ENCODE measurements at regions of chr1 and their contacts with region 1.

Region 1: GRCh38 chr1:244652699-244653466 is at the start of gene DESI2:
- DNase-seq: peak; percentile 99
- ATAC-seq: peak; percentile 94 to 97 (median 96)
- H3K4me3 ChIP-seq: peak within 1 kb of the TSS; percentile 98
- H3K27ac ChIP-seq: peak within 1 kb of the TSS; percentile 99
- H3K4me1 ChIP-seq: peaks cover 34% of the 10 kb centered on the region
- H3K27me3 ChIP-seq: no peaks in the 10 kb centered on the region
- CTCF ChIP-seq: peak; percentile 53
- total RNA-seq, gene DESI2: 18.3 to 20.1 (median 19.6) TPM

Region 2: GRCh38 chr1:244451951-244452795 is 200.7 kb before region 1 on chr1:
- intact Hi-C with region 1: loop called in 1 of 2 experiments (anchors 5 kb)
- DNase-seq: peak; percentile 100
- ATAC-seq: peak; percentile 96 to 99 (median 98)
- H3K4me3 ChIP-seq: peak overlapping the region; percentile 97
- H3K27ac ChIP-seq: peak overlapping the region; percentile 93
- H3K4me1 ChIP-seq: peaks cover 22% of the 10 kb centered on the region
- H3K27me3 ChIP-seq: no peaks in the 10 kb centered on the region
- CTCF ChIP-seq: peak; percentile 42

Region 3: GRCh38 chr1:244461245-244462071 is 191.4 kb before region 1 on chr1 and contains the start of gene CATSPERE:
- intact Hi-C with region 1: loop called in 1 of 2 experiments (anchors 5 kb)
- DNase-seq: peak; percentile 91 to 94
- ATAC-seq: peak; percentile 98 to 99 (median 99)
- H3K4me3 ChIP-seq: peak within 1 kb of the TSS; percentile 68
- H3K27ac ChIP-seq: peak within 1 kb of the TSS; percentile 81
- H3K4me1 ChIP-seq: peaks cover 8% of the 10 kb centered on the region
- H3K27me3 ChIP-seq: no peaks in the 10 kb centered on the region
- CTCF ChIP-seq: no peak
- total RNA-seq, gene CATSPERE: 0.30 to 0.60 (median 0.46) TPM

Region 4: DNA sequence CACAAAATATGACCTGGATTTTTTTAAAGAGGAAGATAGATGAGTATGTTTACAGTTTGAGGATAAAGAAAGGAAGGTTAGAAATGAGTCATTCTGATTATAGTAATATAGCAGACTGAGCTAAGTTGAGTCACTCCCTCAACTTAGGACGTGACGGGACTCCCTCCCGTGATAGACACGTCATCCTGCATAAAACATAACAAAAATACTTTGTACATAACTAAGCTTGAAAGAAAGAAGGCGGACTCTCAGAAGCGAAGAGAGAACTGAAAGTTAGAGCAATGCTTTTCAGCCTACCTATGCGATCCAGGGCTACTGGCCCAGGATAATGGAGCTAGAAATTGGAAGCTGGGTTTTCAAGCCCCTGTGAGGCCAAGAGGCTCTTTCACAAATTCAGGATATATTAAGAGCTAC is 52.9 kb before region 1 on chr1:
- intact Hi-C with region 1: loop called in 1 of 2 experiments (anchors 5 kb)
- DNase-seq: no peak
- ATAC-seq: peak; percentile 75 to 83 (median 80)
- H3K4me3 ChIP-seq: no peak overlapping the region
- H3K27ac ChIP-seq: peak overlapping the region; percentile 56
- H3K4me1 ChIP-seq: no peaks in the 10 kb centered on the region
- H3K27me3 ChIP-seq: no peaks in the 10 kb centered on the region
- CTCF ChIP-seq: no peak

Region 5: GRCh38 chr1:244614113-244614836 is 38.6 kb before region 1 on chr1:
- intact Hi-C with region 1: no loop called
- DNase-seq: no peak
- ATAC-seq: no peak
- H3K4me3 ChIP-seq: no peak overlapping the region
- H3K27ac ChIP-seq: no peak overlapping the region
- H3K4me1 ChIP-seq: no peaks in the 10 kb centered on the region
- H3K27me3 ChIP-seq: no peaks in the 10 kb centered on the region
- CTCF ChIP-seq: no peak

Region 6: GRCh38 chr1:244712669-244713068 is 59.8 kb after region 1 on chr1:
- intact Hi-C with region 1: no loop called
- DNase-seq: no peak
- ATAC-seq: no peak
- H3K4me3 ChIP-seq: no peak overlapping the region
- H3K27ac ChIP-seq: no peak overlapping the region
- H3K4me1 ChIP-seq: no peaks in the 10 kb centered on the region
- H3K27me3 ChIP-seq: no peaks in the 10 kb centered on the region
- CTCF ChIP-seq: no peak

Region 7: GRCh38 chr1:244727871-244728474 is 75.1 kb after region 1 on chr1:
- intact Hi-C with region 1: loop called in 1 of 2 experiments (anchors 5 kb)
- DNase-seq: no peak
- ATAC-seq: no peak
- H3K4me3 ChIP-seq: no peak overlapping the region
- H3K27ac ChIP-seq: no peak overlapping the region
- H3K4me1 ChIP-seq: no peaks in the 10 kb centered on the region
- H3K27me3 ChIP-seq: no peaks in the 10 kb centered on the region
- CTCF ChIP-seq: no peak

Region 8: GRCh38 chr1:244970661-244971551 is 318.0 kb after region 1 on chr1:
- intact Hi-C with region 1: loop called in 1 of 2 experiments (anchors 10 kb)
- DNase-seq: peak; percentile 94 to 97
- ATAC-seq: peak; percentile 84 to 88 (median 86)
- H3K4me3 ChIP-seq: peak overlapping the region; percentile 73
- H3K27ac ChIP-seq: peak overlapping the region; percentile 98
- H3K4me1 ChIP-seq: peaks cover 23% of the 10 kb centered on the region
- H3K27me3 ChIP-seq: no peaks in the 10 kb centered on the region
- CTCF ChIP-seq: peak; percentile 45